ENCODE measurements at regions of chr6 and their contacts with region 1.

Region 1: GRCh38 chr6:2353412-2354137 is 108.2 kb upstream of the GMDS start:
- DNase-seq: peak in 4 of 5 donors; percentile 44 to 59 (median 49)
- ATAC-seq: peak in 3 of 4 donors; percentile 75 to 87 (median 84)
- H3K4me3 ChIP-seq: peak overlapping the region in 1 of 12 donors; percentile 17
- H3K27ac ChIP-seq: peak overlapping the region in 1 of 12 donors; percentile 30
- H3K4me1 ChIP-seq: peaks cover 0 to 11% (median 5%) of the 10 kb centered on the region in 12 donors
- H3K27me3 ChIP-seq: no peaks in the 10 kb centered on the region
- CTCF ChIP-seq: peak; percentile 64 to 89 (median 80)
- POLR2A ChIP-seq: no peak

Region 2: GRCh38 chr6:1596088-1596852 is 757.3 kb before region 1 on chr6:
- intact Hi-C with region 1: loop called in 9 of 10 experiments (anchors 2 to 5 kb)
- DNase-seq: peak in 4 of 5 donors; percentile 38 to 72 (median 52)
- ATAC-seq: peak; percentile 69 to 90 (median 82)
- H3K4me3 ChIP-seq: peak overlapping the region in 10 of 12 donors; percentile 1 to 44 (median 26)
- H3K27ac ChIP-seq: no peak overlapping the region
- H3K4me1 ChIP-seq: peaks cover 0 to 11% (median 6%) of the 10 kb centered on the region in 12 donors
- H3K27me3 ChIP-seq: peaks cover 8 to 47% (median 21%) of the 10 kb centered on the region in 9 donors
- CTCF ChIP-seq: peak; percentile 88 to 97 (median 94)
- POLR2A ChIP-seq: no peak

Region 3: GRCh38 chr6:2103644-2104523 is 249.7 kb before region 1 on chr6:
- intact Hi-C with region 1: loop called in 5 of 10 experiments (anchors 2 to 10 kb)
- DNase-seq: no peak
- ATAC-seq: peak; percentile 61 to 81 (median 76)
- H3K4me3 ChIP-seq: peak overlapping the region in 6 of 12 donors; percentile 2 to 38 (median 15)
- H3K27ac ChIP-seq: peak overlapping the region in 1 of 12 donors; percentile 12
- H3K4me1 ChIP-seq: peaks cover 0 to 12% (median 1%) of the 10 kb centered on the region in 12 donors
- H3K27me3 ChIP-seq: no peaks in the 10 kb centered on the region
- CTCF ChIP-seq: peak; percentile 35 to 73 (median 60)
- POLR2A ChIP-seq: no peak

Region 4: DNA sequence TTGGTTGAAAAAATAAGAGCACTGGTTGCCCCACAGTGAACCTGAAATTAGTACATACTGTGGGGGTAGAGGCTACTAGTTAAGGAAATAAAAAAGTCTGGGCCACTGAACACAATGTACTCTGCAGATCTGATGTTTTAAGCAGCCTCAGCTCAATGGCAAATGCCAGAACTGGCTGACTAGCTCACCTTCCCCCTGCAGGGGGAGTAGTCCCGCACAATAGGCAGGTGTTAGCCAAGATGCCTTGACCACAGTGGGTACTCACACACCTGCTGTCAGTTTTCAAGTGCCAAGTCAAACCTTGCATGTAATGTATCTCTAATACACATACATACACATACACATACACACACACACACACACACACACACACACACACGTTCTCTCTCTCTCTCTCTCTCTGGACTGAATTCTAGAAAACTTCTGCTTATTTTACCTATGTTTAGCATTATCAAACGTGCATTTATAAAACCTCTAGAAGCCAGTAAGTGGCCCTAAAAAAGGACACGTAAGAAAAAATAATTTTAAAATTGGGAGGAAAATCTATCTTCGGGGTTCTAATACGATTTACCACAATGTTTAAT is 144.3 kb before region 1 on chr6:
- intact Hi-C with region 1: loop called in 5 of 10 experiments (anchors 5 to 10 kb)
- DNase-seq: no peak
- ATAC-seq: peak; percentile 55 to 75 (median 69)
- H3K4me3 ChIP-seq: no peak overlapping the region
- H3K27ac ChIP-seq: no peak overlapping the region
- H3K4me1 ChIP-seq: no peaks in the 10 kb centered on the region
- H3K27me3 ChIP-seq: no peaks in the 10 kb centered on the region
- CTCF ChIP-seq: peak in 11 of 12 donors; percentile 12 to 50 (median 41)
- POLR2A ChIP-seq: no peak

Region 5: GRCh38 chr6:2215342-2215741 is 138.2 kb before region 1 on chr6:
- intact Hi-C with region 1: loop called in 2 of 10 experiments (anchors 10 kb)
- DNase-seq: no peak
- ATAC-seq: no peak
- H3K4me3 ChIP-seq: no peak overlapping the region
- H3K27ac ChIP-seq: no peak overlapping the region
- H3K4me1 ChIP-seq: peaks cover 0 to 4% (median 0%) of the 10 kb centered on the region in 12 donors
- H3K27me3 ChIP-seq: no peaks in the 10 kb centered on the region
- CTCF ChIP-seq: no peak
- POLR2A ChIP-seq: no peak

Region 6: DNA sequence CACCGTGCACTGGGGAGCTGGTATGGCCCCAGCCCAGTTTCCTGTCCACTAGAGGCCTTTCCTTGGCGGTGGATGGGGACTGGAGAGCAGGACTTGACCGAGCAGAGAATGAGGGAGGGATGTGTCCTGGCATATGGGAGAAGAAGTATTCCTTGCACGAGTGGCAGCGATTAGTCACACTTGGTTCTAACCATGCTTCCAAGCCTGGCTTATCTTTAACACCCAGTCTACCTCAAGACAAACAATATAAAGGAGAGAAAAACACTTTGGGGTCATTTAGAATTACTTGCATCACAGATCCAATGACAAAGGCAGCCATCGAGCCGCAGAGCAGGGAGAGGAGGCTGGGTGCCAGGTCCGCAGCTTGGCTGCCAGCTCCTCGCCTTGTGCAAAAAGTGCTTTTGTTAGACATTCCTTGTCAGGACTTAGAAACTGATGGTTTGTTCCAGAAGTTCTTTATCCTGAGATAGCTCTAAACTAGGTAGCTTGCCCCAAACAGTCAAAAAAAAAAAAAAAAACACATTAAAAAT is 106.7 kb after region 1 on chr6:
- intact Hi-C with region 1: no loop called
- DNase-seq: no peak
- ATAC-seq: no peak
- H3K4me3 ChIP-seq: no peak overlapping the region
- H3K27ac ChIP-seq: no peak overlapping the region
- H3K4me1 ChIP-seq: no peaks in the 10 kb centered on the region
- H3K27me3 ChIP-seq: no peaks in the 10 kb centered on the region
- CTCF ChIP-seq: no peak
- POLR2A ChIP-seq: no peak

Region 7: DNA sequence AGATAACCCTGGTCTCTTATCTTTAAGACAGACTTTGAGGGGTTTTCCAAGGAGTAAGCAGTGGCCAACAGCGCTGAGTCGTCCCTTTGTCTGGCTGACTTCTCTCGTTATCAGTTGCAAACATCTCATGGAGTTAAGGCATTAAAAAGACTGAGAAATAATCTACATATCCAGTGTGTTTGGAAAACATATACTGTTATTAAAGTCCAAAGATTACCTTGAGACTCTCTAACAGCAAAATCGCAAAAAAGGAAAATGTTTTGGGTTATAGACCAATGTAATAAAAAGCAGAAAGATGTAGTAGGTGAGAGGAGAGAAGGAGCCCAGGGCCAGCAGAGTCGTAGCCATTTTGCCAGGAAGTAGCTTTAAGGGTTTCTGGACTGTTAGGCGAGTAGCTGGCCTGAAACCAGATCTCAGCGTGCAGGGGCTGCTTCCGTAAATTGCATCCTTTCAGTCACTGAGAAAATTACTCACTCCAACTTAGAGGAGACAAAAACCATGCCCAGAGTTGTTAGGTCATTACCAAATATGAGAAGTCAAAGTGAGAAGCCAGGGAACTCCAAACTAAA is 372.5 kb after region 1 on chr6:
- intact Hi-C with region 1: no loop called
- DNase-seq: no peak
- ATAC-seq: peak in 3 of 4 donors; percentile 41 to 52 (median 43)
- H3K4me3 ChIP-seq: no peak overlapping the region
- H3K27ac ChIP-seq: peak overlapping the region in 2 of 12 donors; percentile 6 to 82
- H3K4me1 ChIP-seq: peaks cover 0 to 13% (median 5%) of the 10 kb centered on the region in 12 donors
- H3K27me3 ChIP-seq: no peaks in the 10 kb centered on the region
- CTCF ChIP-seq: no peak
- POLR2A ChIP-seq: no peak